CD8-positive, alpha-beta T cell (primary cell): ENCODE measurements at regions of chr19 and their contacts with region 1.

Region 1: DNA sequence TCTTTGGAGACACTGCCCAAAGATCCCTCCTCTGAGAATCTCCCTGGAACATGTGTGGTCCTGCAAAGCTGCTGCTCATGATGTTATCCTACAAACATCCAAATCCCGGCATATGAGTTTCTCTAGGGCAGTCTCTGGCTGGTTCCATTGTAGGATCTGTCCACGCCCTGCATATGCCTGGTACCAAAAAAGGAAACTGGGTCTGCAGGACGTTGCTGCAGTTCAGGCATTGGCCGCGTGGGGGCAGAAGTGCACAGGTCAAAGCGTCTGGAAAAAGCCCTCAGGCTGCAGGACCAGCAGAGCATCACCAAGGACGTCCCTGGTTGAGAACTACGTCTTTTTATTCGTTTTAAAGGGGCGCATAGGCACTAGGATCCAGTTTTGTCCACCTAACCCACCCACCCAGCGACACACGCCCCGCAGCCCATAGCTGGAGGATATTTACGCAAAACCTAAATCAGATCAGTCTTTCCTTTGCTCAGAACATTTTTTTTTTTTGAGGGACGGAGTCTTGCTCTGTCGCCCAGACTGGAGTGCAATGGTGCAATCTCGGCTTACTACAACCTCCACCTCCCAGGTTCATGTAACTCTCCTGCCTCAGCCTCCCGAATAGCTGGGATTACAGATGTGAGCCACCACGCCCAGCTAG is 12.9 kb upstream of the ZNF564 start:
- DNase-seq: peak; percentile 83 to 96 (median 91)
- ATAC-seq: peak; percentile 100
- H3K4me3 ChIP-seq: no peak overlapping the region
- H3K4me3 Mint-ChIP-seq: no peak overlapping the region
- H3K27ac ChIP-seq: no peak overlapping the region
- H3K27ac Mint-ChIP-seq: no peak overlapping the region
- H3K4me1 ChIP-seq: no peaks in the 10 kb centered on the region
- H3K4me1 Mint-ChIP-seq: peaks cover 5% of the 10 kb centered on the region
- H3K27me3 ChIP-seq: no peaks in the 10 kb centered on the region
- H3K27me3 Mint-ChIP-seq: no peaks in the 10 kb centered on the region
- CTCF ChIP-seq: peak; percentile 91

Region 2: DNA sequence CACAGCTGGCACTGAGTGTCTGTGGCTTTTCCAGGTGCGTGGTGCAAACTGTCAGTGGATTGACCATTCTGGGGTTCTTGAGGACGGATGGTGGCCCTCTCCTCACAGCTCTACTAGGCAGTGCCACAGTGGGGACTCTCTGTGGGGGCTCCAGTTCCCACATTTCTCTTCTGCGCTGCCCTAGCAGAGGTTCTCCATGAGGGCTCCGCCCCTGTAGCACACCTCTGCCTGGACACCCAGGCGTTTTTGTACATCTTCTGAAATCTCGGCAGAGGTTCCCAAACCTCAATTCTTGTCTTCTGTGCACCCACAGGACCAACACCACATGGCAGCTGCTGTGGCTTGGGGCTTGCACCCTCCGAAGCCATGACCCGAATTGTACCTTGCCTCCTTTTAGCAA is 957.7 kb before region 1 on chr19:
- CTCF ChIA-PET with region 1: no interaction called
- POLR2A ChIA-PET with region 1: no interaction called
- intact Hi-C with region 1: no loop called
- DNase-seq: no peak
- ATAC-seq: no peak
- H3K4me3 ChIP-seq: no peak overlapping the region
- H3K4me3 Mint-ChIP-seq: no peak overlapping the region
- H3K27ac ChIP-seq: no peak overlapping the region
- H3K27ac Mint-ChIP-seq: no peak overlapping the region
- H3K4me1 ChIP-seq: no peaks in the 10 kb centered on the region
- H3K4me1 Mint-ChIP-seq: peaks cover 9% of the 10 kb centered on the region
- H3K27me3 ChIP-seq: no peaks in the 10 kb centered on the region
- H3K27me3 Mint-ChIP-seq: no peaks in the 10 kb centered on the region
- CTCF ChIP-seq: no peak

Region 3: DNA sequence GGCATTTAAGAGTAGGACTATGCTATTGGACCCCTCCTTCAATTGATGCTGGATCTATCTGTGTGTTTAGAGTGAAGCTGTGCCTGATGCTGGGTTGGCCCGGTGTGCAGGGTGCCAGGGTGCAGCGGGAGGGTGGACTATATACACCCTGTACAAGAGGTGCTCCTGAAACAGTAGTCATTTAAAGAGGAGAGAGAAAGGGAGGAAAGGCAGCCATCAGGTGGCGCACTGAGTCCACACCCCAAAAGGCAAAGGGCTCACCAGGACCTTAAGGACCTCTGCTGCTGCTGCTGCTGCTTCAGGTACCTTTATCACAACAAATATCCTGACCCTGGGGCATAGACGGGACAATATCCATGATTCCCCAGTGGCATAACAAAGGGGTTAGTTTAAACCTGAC is 361.9 kb before region 1 on chr19:
- CTCF ChIA-PET with region 1: interaction called, 4 read pairs
- POLR2A ChIA-PET with region 1: no interaction called
- intact Hi-C with region 1: loop called in 1 of 2 experiments (anchors 2 kb)
- DNase-seq: peak; percentile 28 to 77 (median 62)
- ATAC-seq: peak; percentile 83
- H3K4me3 ChIP-seq: no peak overlapping the region
- H3K4me3 Mint-ChIP-seq: no peak overlapping the region
- H3K27ac ChIP-seq: no peak overlapping the region
- H3K27ac Mint-ChIP-seq: no peak overlapping the region
- H3K4me1 ChIP-seq: peaks cover 8% of the 10 kb centered on the region
- H3K4me1 Mint-ChIP-seq: peaks cover 18% of the 10 kb centered on the region
- H3K27me3 ChIP-seq: no peaks in the 10 kb centered on the region
- H3K27me3 Mint-ChIP-seq: no peaks in the 10 kb centered on the region
- CTCF ChIP-seq: peak; percentile 36

Region 4: DNA sequence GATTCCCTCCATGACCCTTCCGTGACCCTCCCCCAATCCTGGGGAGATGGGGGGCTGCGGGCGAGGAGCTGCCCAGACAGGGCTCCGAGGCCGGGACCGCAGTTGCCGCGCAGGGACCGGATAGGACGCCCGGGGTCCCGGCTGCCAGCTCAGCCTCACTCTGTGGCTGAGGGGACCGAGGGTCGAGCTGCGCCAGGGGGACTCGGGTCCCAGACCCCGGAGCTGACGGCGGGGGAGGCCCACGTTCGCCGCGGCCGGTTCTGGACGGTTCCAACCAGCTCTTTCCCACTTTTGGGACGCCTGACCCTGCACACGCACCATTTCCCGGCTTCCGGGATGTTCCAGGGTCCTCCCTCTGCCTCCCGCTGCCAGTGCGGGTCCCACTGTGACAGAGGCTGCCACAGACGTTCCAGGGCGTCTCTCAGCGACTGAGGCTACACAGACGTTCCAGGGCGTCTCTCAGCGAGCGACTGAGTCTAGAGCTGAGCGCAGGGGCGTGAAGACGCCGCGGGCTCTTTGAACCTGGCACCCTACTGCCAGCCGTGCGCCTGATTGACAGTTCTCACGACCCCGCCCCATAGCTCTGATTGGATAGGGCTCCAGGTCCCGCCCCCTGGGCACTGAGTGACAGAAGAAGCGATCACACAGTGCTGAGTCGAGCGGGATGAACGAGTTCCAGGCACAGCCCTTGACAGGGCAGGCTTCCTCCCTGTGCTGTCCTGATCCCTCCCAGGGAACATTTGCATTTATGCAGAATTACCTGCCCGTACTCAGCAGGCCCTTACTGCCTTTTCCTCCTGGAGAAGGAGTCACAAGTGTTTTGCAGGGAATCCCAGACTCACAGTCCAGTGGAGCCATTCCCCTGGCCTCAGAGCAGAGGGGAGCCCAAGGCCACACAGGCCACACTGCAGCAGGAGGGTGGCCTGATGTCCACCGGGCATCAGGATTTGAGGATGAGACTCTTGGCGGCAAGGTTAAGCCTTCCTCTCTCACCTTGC is 230.7 kb before region 1 on chr19 and contains the start of gene ZNF563:
- CTCF ChIA-PET with region 1: no interaction called
- POLR2A ChIA-PET with region 1: no interaction called
- intact Hi-C with region 1: no loop called
- DNase-seq: peak; percentile 94 to 98 (median 97)
- ATAC-seq: peak; percentile 94
- H3K4me3 ChIP-seq: peak within 1 kb of the TSS; percentile 81 to 86
- H3K4me3 Mint-ChIP-seq: peak within 1 kb of the TSS; percentile 96
- H3K27ac ChIP-seq: peak within 1 kb of the TSS; percentile 81 to 83
- H3K27ac Mint-ChIP-seq: peak within 1 kb of the TSS; percentile 99
- H3K4me1 ChIP-seq: peaks cover 35% of the 10 kb centered on the region
- H3K4me1 Mint-ChIP-seq: peaks cover 41% of the 10 kb centered on the region
- H3K27me3 ChIP-seq: no peaks in the 10 kb centered on the region
- H3K27me3 Mint-ChIP-seq: no peaks in the 10 kb centered on the region
- CTCF ChIP-seq: no peak
- total RNA-seq, gene ZNF563: 2.2 to 2.5 TPM

Region 5: DNA sequence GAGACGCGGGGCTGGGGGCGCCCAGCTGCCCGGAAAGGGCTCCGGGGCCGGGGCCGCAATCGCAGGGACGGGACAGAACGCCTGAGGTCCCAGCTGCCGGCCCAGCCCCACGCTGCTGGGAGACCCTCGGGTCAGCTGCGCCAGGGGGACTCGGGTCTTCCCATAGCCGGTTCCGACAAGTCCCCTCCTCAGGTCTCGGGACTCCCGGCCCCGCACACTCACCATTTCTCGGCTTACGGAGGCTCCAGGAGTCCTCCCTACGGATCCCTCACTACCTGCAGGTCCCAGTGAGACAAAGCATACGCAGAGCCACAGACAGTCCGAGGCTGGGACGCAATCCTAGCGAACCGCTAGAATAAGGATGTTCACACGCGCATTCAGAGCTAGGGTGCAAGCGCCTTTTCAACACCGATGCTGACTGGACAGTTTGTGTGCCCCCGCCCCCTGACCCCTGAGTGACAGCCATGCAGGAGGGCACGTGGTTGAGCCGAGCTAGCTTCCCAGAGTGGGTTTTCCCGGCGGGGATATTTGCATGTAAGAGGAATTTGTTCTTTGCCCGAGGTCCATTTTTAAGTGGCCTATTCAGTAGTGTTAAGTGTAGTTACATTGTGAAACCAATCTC is 32.9 kb after region 1 on chr19:
- CTCF ChIA-PET with region 1: interaction called, 10 read pairs
- POLR2A ChIA-PET with region 1: no interaction called
- intact Hi-C with region 1: no loop called
- DNase-seq: no peak
- ATAC-seq: no peak
- H3K4me3 ChIP-seq: no peak overlapping the region
- H3K4me3 Mint-ChIP-seq: no peak overlapping the region
- H3K27ac ChIP-seq: no peak overlapping the region
- H3K27ac Mint-ChIP-seq: peak overlapping the region; percentile 11
- H3K4me1 ChIP-seq: no peaks in the 10 kb centered on the region
- H3K4me1 Mint-ChIP-seq: no peaks in the 10 kb centered on the region
- H3K27me3 ChIP-seq: no peaks in the 10 kb centered on the region
- H3K27me3 Mint-ChIP-seq: no peaks in the 10 kb centered on the region
- CTCF ChIP-seq: no peak

Region 6: GRCh38 chr19:12639901-12640613 is 75.9 kb after region 1 on chr19:
- CTCF ChIA-PET with region 1: interaction called, 5 read pairs
- POLR2A ChIA-PET with region 1: no interaction called
- intact Hi-C with region 1: loop called in 1 of 2 experiments (anchors 1 kb)
- DNase-seq: peak; percentile 64 to 89 (median 84)
- ATAC-seq: peak; percentile 81
- H3K4me3 ChIP-seq: peak overlapping the region; percentile 23 to 38
- H3K4me3 Mint-ChIP-seq: peak overlapping the region; percentile 79
- H3K27ac ChIP-seq: peak overlapping the region; percentile 8 to 15
- H3K27ac Mint-ChIP-seq: peak overlapping the region; percentile 70
- H3K4me1 ChIP-seq: peaks cover 18% of the 10 kb centered on the region
- H3K4me1 Mint-ChIP-seq: peaks cover 21% of the 10 kb centered on the region
- H3K27me3 ChIP-seq: no peaks in the 10 kb centered on the region
- H3K27me3 Mint-ChIP-seq: no peaks in the 10 kb centered on the region
- CTCF ChIP-seq: peak; percentile 68

Region 7: GRCh38 chr19:12672744-12673143 is 108.6 kb after region 1 on chr19:
- CTCF ChIA-PET with region 1: interaction called, 151 read pairs
- POLR2A ChIA-PET with region 1: interaction called, 4 read pairs
- intact Hi-C with region 1: loop called (anchors 1 kb)
- DNase-seq: no peak
- ATAC-seq: no peak
- H3K4me3 ChIP-seq: no peak overlapping the region
- H3K4me3 Mint-ChIP-seq: no peak overlapping the region
- H3K27ac ChIP-seq: no peak overlapping the region
- H3K27ac Mint-ChIP-seq: no peak overlapping the region
- H3K4me1 ChIP-seq: peaks cover 29% of the 10 kb centered on the region
- H3K4me1 Mint-ChIP-seq: peaks cover 39% of the 10 kb centered on the region
- H3K27me3 ChIP-seq: no peaks in the 10 kb centered on the region
- H3K27me3 Mint-ChIP-seq: no peaks in the 10 kb centered on the region
- CTCF ChIP-seq: no peak

Region 8: GRCh38 chr19:12757544-12758274 is 193.6 kb after region 1 on chr19:
- CTCF ChIA-PET with region 1: interaction called, 3 read pairs
- POLR2A ChIA-PET with region 1: no interaction called
- intact Hi-C with region 1: loop called (anchors 1 kb)
- DNase-seq: peak; percentile 32 to 74 (median 49)
- ATAC-seq: peak; percentile 78
- H3K4me3 ChIP-seq: no peak overlapping the region
- H3K4me3 Mint-ChIP-seq: peak overlapping the region; percentile 18
- H3K27ac ChIP-seq: no peak overlapping the region
- H3K27ac Mint-ChIP-seq: no peak overlapping the region
- H3K4me1 ChIP-seq: peaks cover 7% of the 10 kb centered on the region
- H3K4me1 Mint-ChIP-seq: peaks cover 6% of the 10 kb centered on the region
- H3K27me3 ChIP-seq: peaks cover 3 to 4% of the 10 kb centered on the region in 2 experiments
- H3K27me3 Mint-ChIP-seq: peaks cover 16% of the 10 kb centered on the region
- CTCF ChIP-seq: peak; percentile 93

Region 9: GRCh38 chr19:12847159-12848139 is 283.3 kb after region 1 on chr19:
- CTCF ChIA-PET with region 1: interaction called, 4 read pairs
- POLR2A ChIA-PET with region 1: no interaction called
- intact Hi-C with region 1: loop called in 1 of 2 experiments (anchors 1 kb)
- DNase-seq: peak; percentile 66 to 90 (median 83)
- ATAC-seq: peak; percentile 96
- H3K4me3 ChIP-seq: peak overlapping the region; percentile 20 to 25
- H3K4me3 Mint-ChIP-seq: peak overlapping the region; percentile 22
- H3K27ac ChIP-seq: no peak overlapping the region
- H3K27ac Mint-ChIP-seq: no peak overlapping the region
- H3K4me1 ChIP-seq: peaks cover 4% of the 10 kb centered on the region
- H3K4me1 Mint-ChIP-seq: peaks cover 3% of the 10 kb centered on the region
- H3K27me3 ChIP-seq: peaks cover 0 to 9% of the 10 kb centered on the region in 2 experiments
- H3K27me3 Mint-ChIP-seq: peaks cover 37% of the 10 kb centered on the region
- CTCF ChIP-seq: peak; percentile 99

Region 10: DNA sequence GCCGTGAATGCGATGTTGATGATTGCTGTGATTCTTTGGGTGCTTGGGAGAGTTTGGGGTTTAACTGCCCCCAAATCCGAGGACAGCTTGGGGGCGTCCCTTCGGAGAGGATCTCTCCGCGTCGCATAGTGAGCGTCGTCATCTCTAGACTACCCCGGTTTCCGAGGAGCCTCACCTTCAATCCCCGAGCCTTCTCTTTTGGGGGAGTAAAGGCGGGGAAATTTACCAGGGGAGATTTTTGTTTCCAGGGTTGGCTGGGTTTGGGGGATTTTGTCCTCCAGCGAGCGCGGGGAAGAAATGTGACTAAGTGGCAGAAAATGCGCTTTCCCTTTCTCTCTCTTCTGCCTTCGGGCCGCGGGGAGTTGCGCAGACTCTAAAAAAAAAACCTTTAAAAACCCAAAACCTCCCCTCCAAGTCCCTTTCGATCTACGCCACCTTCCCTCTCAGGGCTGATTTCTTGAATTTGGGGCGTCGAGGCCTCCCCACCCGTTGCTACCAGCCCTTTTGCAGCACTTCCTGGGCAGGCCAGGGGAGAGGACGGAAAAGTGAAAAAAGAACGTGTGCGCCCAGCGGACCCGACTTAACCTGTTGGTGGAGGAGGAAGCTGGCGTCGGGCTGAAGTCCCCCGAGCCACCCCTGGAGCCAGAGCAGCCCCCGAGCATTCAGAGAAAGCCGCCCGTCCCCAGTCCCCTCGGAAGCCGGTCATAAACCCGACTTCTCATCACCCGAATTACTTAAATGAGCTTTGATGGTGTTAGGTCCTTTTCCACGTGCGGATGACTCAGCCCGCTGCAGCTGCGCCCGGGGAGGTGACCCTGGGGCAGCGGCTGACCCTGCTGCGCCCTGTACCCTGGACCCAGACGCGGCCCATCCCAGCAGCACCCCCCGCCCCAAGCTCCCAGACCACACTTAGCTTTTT is 448.8 kb after region 1 on chr19:
- CTCF ChIA-PET with region 1: no interaction called
- POLR2A ChIA-PET with region 1: no interaction called
- intact Hi-C with region 1: no loop called
- DNase-seq: peak in 6 of 9 experiments; percentile 23 to 64 (median 46)
- ATAC-seq: peak; percentile 62
- H3K4me3 ChIP-seq: peak overlapping the region; percentile 43 to 44
- H3K4me3 Mint-ChIP-seq: peak overlapping the region; percentile 87
- H3K27ac ChIP-seq: no peak overlapping the region
- H3K27ac Mint-ChIP-seq: peak overlapping the region; percentile 10
- H3K4me1 ChIP-seq: peaks cover 31% of the 10 kb centered on the region
- H3K4me1 Mint-ChIP-seq: peaks cover 25% of the 10 kb centered on the region
- H3K27me3 ChIP-seq: peaks cover 34 to 53% of the 10 kb centered on the region in 2 experiments
- H3K27me3 Mint-ChIP-seq: peaks cover 73% of the 10 kb centered on the region
- CTCF ChIP-seq: no peak